ENCODE measurements at regions of chr17 and their contacts with region 1.

Region 1: DNA sequence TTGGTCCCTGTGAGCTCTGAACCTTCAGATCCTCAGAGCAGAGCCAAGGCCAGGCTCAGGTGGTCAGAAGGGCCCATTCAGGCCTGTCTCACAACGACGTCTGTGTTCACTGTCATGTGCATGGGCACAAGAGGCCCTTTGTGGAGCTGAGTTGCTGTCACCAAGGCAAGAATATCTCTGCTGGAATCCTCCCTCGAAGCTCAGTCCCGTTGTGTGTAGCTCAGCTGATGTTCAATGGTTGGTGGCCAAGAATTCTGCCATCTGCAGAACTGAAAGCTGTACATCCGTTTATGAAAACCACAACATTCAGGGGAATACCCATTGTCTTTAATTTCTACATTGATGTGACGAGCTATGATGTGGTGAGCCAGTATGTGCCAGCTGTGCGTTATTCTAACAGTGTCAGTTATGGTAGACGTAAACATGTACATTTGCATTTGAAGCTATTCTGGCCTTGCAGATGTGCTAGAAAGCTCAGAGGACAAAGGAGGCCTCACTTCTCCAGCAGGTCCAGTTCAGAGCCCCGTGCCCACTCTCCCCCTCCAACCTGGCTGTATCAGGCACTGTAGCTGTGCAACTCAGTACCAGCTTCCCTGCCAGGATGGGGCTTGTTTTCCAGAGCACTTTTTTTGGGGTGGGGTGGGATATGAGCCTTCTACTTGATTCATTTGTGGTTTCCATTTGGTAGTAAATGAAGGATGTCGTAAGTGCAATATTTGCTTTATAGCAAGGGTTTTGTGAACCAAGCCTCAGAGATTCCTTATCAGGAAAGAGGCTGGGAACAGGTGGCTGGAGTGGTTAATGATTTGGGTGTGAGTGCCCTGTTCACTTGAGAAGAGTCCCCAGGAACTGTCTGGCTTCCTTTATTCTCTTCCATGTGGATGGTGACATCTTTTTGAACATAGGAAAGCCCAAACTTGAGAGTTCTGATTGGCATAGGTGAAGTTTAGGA is 56.1 kb downstream of the B9D1 start:
- DNase-seq: peak; percentile 93
- ATAC-seq: peak; percentile 86
- H3K4me3 ChIP-seq: peak overlapping the region in 1 of 5 experiments; percentile 16
- H3K4me3 Mint-ChIP-seq: peak overlapping the region; percentile 75
- H3K27ac ChIP-seq: peak overlapping the region; percentile 41 to 48
- H3K27ac Mint-ChIP-seq: peak overlapping the region; percentile 81
- H3K4me1 ChIP-seq: peaks cover 68 to 69% of the 10 kb centered on the region in 2 donors
- H3K4me1 Mint-ChIP-seq: peaks cover 67% of the 10 kb centered on the region
- H3K27me3 ChIP-seq: peaks cover 0 to 25% (median 3%) of the 10 kb centered on the region in 4 experiments
- H3K27me3 Mint-ChIP-seq: no peaks in the 10 kb centered on the region
- CTCF ChIP-seq: no peak

Region 2: DNA sequence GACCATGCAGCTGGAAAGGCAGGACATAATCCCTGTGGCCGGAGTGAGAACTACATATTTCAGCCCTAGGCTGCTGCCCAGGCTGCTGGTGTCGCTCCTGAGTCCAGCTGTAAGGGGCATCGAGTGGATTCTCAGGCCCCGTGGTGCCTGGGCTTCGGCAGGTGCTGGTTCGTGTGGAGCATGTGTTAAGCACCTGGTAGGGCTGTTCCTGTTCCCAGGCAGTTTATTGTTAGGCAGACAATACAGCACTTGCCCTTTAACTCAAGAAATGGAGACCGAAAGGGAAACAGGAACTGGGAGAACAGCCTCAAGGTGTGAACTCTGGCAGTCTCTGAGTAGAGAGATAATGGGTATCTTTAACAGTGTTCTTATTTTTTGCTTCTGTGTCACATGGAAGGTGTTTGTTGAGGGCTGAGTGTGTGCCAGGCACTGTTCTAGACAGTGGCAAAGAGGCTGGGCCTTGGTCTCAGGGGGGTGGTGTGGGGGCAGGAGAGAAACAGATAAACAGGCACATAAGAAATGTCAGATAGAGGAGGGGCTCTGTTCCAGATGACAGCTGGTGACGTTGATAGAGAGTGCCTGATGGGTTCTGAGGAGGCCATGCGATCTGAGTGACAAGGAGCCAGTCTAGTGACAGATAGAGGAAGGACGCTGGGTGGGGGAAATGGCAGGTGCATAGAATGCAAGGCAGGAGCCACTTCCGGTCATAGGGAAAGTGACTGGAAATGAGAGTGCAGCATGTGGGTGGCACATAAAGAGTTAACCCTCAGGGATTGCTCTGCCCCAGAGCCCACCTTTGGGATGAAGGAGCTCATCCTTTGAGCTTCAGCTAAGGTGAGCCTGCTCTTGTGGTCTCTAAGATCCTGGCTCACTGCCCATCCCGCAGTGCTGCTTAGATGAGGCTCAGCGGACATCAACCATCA is 35.5 kb before region 1 on chr17:
- CTCF ChIA-PET with region 1: no interaction called
- POLR2A ChIA-PET with region 1: no interaction called
- intact Hi-C with region 1: loop called (anchors 1 kb)
- DNase-seq: peak; percentile 71
- ATAC-seq: peak; percentile 90
- H3K4me3 ChIP-seq: no peak overlapping the region
- H3K4me3 Mint-ChIP-seq: peak overlapping the region; percentile 38
- H3K27ac ChIP-seq: no peak overlapping the region
- H3K27ac Mint-ChIP-seq: peak overlapping the region; percentile 88
- H3K4me1 ChIP-seq: peaks cover 24 to 27% of the 10 kb centered on the region in 2 donors
- H3K4me1 Mint-ChIP-seq: peaks cover 41% of the 10 kb centered on the region
- H3K27me3 ChIP-seq: peaks cover 0 to 6% (median 2%) of the 10 kb centered on the region in 4 experiments
- H3K27me3 Mint-ChIP-seq: no peaks in the 10 kb centered on the region
- CTCF ChIP-seq: no peak

Region 3: DNA sequence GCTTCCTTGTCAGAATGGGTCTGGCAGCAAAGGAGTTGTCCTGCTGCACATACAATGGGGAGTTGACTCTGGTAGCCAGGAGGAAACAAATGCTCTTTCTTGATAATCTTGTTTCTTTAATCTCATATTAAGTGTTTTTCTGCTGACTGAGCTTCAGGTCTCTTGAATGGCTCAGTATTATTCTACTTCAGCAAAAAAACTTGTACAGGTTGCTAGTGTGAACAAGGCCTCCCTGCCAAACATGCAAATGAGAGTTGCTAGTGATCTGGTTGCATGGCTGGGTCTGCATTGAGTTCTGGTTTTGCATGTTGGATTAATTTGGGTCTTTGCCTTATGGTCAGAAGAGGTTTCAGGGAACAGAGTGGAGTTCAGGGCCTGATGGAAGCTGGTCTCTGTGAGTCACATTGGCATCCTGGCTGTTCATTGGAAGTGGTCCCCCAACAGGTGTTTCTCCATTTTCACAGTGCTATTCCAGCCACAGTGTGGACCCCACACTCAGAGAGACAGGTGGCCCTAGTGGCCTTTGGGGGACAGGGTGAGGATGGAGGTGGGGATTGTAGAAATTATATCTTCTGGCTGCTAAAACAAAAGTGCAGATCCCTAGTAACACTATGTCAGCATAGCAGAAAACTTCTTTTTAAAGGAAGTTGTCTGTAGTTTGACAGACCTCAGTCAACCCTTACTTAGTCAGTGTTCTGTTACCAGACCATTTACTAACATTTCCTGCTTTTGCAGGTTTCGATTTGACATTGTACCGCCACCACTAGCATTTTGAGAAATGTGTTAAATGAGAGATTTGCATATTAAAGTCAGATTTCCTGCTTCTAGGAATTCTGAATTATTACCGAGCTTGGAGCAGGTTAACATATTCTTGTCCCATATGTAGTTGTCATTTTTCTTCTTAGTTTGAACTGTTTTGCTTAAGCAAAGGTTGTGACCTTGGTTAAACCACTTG is 22.2 kb before region 1 on chr17:
- CTCF ChIA-PET with region 1: interaction called, 4 read pairs
- POLR2A ChIA-PET with region 1: no interaction called
- intact Hi-C with region 1: loop called (anchors 1 kb)
- DNase-seq: peak; percentile 58
- ATAC-seq: peak; percentile 73
- H3K4me3 ChIP-seq: peak overlapping the region in 1 of 5 experiments; percentile 17
- H3K4me3 Mint-ChIP-seq: peak overlapping the region; percentile 52
- H3K27ac ChIP-seq: no peak overlapping the region
- H3K27ac Mint-ChIP-seq: peak overlapping the region; percentile 8
- H3K4me1 ChIP-seq: peaks cover 20 to 27% of the 10 kb centered on the region in 2 donors
- H3K4me1 Mint-ChIP-seq: peaks cover 27% of the 10 kb centered on the region
- H3K27me3 ChIP-seq: peaks cover 0 to 38% (median 2%) of the 10 kb centered on the region in 4 experiments
- H3K27me3 Mint-ChIP-seq: peaks cover 15% of the 10 kb centered on the region
- CTCF ChIP-seq: no peak

Region 4: DNA sequence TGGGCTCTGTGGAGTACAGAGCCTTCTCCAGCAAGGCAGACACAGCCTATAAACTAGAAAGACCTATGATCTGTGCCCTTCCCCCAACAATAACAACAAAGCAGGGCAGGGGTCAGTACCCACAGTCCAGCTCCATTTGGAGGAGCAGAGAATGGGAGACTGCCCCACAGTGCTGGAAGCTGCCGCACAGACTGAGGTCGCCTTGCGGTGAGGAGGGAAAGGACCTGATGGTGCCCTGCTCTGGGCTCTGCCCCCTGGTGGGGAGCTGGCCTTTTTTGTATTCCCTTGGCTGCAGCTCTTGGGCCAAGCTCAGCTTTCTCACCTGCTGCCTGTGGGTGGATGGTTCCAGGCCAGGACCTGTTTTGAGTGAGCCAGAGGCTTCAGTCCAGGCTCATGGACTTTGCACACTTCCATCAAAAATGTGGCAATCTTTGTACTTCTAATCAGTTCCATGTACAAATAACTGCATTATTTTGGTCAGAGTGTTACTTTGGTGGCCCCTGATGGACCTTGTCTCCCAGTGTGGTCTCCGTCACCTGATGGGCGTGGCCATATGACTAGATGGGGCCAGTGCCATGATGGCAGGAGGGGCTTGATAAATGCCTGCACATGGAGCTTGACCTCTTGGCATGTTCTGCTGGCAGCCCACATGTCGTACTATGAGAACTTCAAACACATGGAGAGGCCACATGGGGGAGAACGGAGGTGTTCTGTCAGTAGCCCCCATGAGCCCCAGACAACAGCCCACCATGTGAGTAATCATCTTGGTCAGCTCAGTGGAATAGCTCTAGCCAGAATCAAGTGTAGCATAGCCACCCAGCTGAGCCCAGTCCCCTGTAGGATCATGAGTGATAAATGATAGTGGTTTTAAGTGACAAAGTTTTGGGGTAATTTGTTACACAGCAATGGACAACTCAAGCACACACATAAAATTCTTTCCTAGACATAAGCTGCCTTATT is 31.9 kb after region 1 on chr17:
- CTCF ChIA-PET with region 1: interaction called, 37 read pairs
- POLR2A ChIA-PET with region 1: no interaction called
- intact Hi-C with region 1: loop called (anchors 1 kb)
- DNase-seq: peak; percentile 86
- ATAC-seq: peak; percentile 98
- H3K4me3 ChIP-seq: no peak overlapping the region
- H3K4me3 Mint-ChIP-seq: no peak overlapping the region
- H3K27ac ChIP-seq: no peak overlapping the region
- H3K27ac Mint-ChIP-seq: no peak overlapping the region
- H3K4me1 ChIP-seq: peaks cover 0 to 3% of the 10 kb centered on the region in 2 donors
- H3K4me1 Mint-ChIP-seq: no peaks in the 10 kb centered on the region
- H3K27me3 ChIP-seq: peaks cover 0 to 3% (median 0%) of the 10 kb centered on the region in 4 experiments
- H3K27me3 Mint-ChIP-seq: peaks cover 15% of the 10 kb centered on the region
- CTCF ChIP-seq: peak; percentile 88

Region 5: GRCh38 chr17:19470532-19471261 is 164.3 kb after region 1 on chr17:
- CTCF ChIA-PET with region 1: no interaction called
- POLR2A ChIA-PET with region 1: no interaction called
- intact Hi-C with region 1: no loop called
- DNase-seq: no peak
- ATAC-seq: no peak
- H3K4me3 ChIP-seq: no peak overlapping the region
- H3K4me3 Mint-ChIP-seq: no peak overlapping the region
- H3K27ac ChIP-seq: no peak overlapping the region
- H3K27ac Mint-ChIP-seq: no peak overlapping the region
- H3K4me1 ChIP-seq: peaks cover 0 to 2% of the 10 kb centered on the region in 2 donors
- H3K4me1 Mint-ChIP-seq: peaks cover 1% of the 10 kb centered on the region
- H3K27me3 ChIP-seq: no peaks in the 10 kb centered on the region
- H3K27me3 Mint-ChIP-seq: no peaks in the 10 kb centered on the region
- CTCF ChIP-seq: no peak

Measured in B cell (primary cell).